ENCODE measurements at regions of chr6 and their contacts with region 1.

Region 1: GRCh38 chr6:88780714-88781389 is 182.6 kb downstream of the RNGTT start:
- DNase-seq: peak; percentile 46
- H3K4me3 ChIP-seq: no peak overlapping the region
- H3K27ac ChIP-seq: no peak overlapping the region
- H3K27me3 ChIP-seq: no peaks in the 10 kb centered on the region
- CTCF ChIP-seq: peak; percentile 91

Region 2: DNA sequence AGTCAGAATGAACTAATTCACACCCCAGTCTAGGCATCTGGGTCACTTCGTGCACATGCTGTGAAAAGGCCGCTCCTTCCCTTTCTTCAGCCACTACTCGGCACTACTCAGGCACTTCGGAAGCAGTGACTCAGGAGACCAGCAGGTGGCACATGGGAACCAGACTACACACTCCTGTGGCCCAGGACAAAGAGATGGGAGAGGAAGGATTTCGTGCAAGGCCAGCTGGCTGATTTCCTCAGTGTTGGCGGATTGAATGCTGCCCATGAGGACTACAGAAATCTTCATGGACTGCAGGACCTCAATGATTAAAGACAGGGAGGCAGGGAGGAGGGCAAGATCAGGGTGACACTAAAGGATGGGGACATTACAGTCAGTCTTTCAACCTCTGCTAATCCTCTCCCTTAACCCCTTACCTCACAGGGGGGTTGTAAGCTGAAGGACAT is 851.0 kb before region 1 on chr6:
- CTCF ChIA-PET with region 1: interaction called, 10 read pairs
- POLR2A ChIA-PET with region 1: no interaction called
- DNase-seq: peak; percentile 53
- H3K4me3 ChIP-seq: no peak overlapping the region
- H3K27ac ChIP-seq: no peak overlapping the region
- H3K27me3 ChIP-seq: peaks cover 4% of the 10 kb centered on the region
- CTCF ChIP-seq: peak; percentile 93

Region 3: DNA sequence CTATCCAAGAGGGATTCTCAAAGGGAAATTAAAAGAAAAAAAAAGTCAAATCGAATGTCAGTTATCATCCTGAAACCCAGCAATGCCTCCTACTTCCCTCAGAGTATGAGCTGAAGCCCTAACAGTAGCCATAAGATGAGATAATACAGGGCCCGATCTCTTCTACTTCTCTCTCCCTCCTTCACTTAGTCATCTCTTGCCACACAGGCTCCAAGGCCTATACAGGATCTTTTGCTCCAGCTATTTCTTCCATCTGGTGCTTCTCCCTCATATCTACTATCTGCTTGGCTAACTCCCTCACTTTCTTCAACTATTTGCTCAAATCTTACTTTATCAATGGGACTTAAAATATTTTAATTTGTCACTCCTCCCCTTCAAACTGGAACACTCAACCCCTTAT is 32.7 kb before region 1 on chr6:
- CTCF ChIA-PET with region 1: interaction called, 15 read pairs
- POLR2A ChIA-PET with region 1: no interaction called
- DNase-seq: no peak
- H3K4me3 ChIP-seq: no peak overlapping the region
- H3K27ac ChIP-seq: no peak overlapping the region
- H3K27me3 ChIP-seq: no peaks in the 10 kb centered on the region
- CTCF ChIP-seq: no peak

Region 4: GRCh38 chr6:88761237-88762031 is 19.4 kb before region 1 on chr6:
- CTCF ChIA-PET with region 1: interaction called, 17 read pairs
- POLR2A ChIA-PET with region 1: no interaction called
- DNase-seq: no peak
- H3K4me3 ChIP-seq: no peak overlapping the region
- H3K27ac ChIP-seq: no peak overlapping the region
- H3K27me3 ChIP-seq: no peaks in the 10 kb centered on the region
- CTCF ChIP-seq: no peak

Region 5: DNA sequence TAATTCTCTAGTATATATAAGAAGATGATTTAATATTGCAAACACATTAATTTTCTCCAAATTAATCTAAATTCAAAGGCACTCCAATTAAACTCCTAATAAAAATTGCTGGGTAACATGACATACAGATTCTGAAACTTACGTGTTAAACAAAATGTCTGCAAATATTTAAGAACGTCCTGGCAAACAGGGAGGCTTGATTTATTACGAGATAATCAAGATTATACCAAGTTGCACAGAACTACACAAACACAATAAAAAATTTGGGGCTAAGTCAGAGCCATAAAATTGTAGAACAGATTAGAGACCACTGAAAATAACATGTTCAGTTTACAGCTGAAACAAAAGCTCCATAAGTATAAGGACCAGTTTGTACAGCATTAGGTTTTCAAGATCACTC is 16.1 kb after region 1 on chr6:
- CTCF ChIA-PET with region 1: interaction called, 10 read pairs
- POLR2A ChIA-PET with region 1: no interaction called
- DNase-seq: no peak
- H3K4me3 ChIP-seq: no peak overlapping the region
- H3K27ac ChIP-seq: no peak overlapping the region
- H3K27me3 ChIP-seq: no peaks in the 10 kb centered on the region
- CTCF ChIP-seq: no peak

Region 6: GRCh38 chr6:88804701-88805100 is 23.8 kb after region 1 on chr6:
- CTCF ChIA-PET with region 1: interaction called, 10 read pairs
- POLR2A ChIA-PET with region 1: no interaction called
- DNase-seq: no peak
- H3K4me3 ChIP-seq: no peak overlapping the region
- H3K27ac ChIP-seq: no peak overlapping the region
- H3K27me3 ChIP-seq: no peaks in the 10 kb centered on the region
- CTCF ChIP-seq: no peak

Region 7: GRCh38 chr6:89022798-89023197 is 241.9 kb after region 1 on chr6:
- CTCF ChIA-PET with region 1: no interaction called
- POLR2A ChIA-PET with region 1: no interaction called
- DNase-seq: no peak
- H3K4me3 ChIP-seq: no peak overlapping the region
- H3K27ac ChIP-seq: no peak overlapping the region
- H3K27me3 ChIP-seq: peaks cover 3% of the 10 kb centered on the region
- CTCF ChIP-seq: no peak

Measured in AG04450 (cell line).